BJ (cell line): ENCODE measurements at regions of chr4 and their contacts with region 1.

Region 1: DNA sequence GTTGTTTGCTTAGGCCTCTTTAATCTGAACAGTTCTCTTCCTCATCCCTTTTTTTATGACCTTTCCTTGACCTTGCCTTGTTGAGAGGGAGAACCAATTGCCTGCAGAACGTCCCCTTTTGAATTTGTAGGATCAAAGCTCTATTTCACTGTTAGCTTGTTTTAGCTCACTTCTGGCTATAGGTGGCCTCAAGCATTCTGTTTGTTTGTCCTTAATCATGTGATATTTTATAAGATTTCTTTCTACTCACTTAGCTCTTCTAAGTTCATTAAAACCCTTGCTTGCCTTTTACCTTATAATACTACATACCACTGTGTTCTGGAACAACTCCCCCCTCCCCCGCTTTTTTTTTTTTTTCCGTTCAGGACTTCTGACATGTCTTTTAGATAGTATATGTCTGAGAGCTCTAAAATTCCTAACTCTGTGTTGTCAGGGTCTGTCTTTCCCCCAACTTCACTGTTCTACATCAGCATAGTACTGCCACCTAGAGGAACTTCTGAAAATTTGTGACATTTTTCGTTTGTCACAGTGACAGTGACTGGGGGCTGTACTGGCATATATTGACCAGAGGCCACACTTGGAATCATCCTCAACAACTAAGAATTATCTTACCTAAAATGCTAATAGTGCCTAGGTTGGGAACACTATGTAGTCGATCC is 128.5 kb downstream of the LARP7 start:
- DNase-seq: no peak
- H3K4me3 ChIP-seq: no peak overlapping the region
- H3K27me3 ChIP-seq: no peaks in the 10 kb centered on the region
- CTCF ChIP-seq: peak; percentile 52

Region 2: DNA sequence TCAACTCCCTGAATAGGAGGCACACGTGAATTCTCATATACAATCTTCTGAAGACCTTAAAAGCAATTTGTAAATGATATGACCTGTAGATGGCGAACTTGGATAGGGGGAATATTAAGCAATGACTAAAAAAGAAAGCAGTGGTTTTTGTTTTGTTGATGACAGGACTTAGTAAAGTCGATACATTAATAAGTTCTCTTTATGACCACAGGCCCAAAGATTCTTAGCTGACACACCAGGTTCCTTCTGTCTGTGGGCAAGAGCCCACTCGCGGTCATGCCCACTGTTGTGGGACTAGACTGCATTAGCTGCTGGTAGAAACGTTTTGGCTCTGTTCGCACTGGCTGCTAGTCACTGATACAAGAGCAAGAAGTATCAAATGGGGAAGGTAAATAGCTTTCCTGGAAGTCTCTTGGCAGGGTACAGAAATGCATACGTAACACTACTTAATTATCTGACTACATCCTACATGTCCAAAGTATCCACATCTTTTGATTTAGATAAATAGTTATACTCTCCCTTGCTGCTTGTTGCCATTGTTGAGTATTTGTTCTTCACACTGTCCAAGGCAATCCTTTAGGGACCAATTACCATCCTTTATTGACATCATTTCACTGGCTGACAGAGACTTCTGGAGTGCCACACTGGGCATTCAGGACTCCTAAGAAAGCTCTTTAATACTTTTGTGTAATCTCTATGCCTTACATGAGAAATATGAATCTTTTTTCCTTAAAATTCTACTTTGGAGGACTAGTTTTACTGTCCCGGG is 437.3 kb before region 1 on chr4:
- CTCF ChIA-PET with region 1: interaction called, 13 read pairs
- POLR2A ChIA-PET with region 1: no interaction called
- DNase-seq: no peak
- H3K4me3 ChIP-seq: no peak overlapping the region
- H3K27me3 ChIP-seq: no peaks in the 10 kb centered on the region
- CTCF ChIP-seq: peak; percentile 57

Region 3: DNA sequence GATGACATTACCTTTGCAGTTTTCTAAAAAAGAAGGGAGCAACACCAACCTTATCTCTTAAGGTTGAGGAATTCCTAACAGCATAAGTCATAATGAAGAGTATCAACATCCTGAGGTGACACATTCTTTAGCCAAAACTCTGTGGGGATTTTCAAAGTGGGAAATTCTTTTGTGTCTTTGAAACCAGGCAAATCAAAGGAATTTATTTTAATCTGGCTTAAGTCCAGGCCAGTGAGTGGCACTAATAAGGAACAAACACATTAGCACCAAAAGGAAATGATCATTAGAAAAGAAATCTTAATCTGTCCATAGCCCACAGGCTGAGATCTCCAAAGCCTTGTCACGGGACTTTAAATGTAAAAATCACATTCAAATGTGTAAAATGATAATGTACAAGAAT is 18.4 kb before region 1 on chr4:
- CTCF ChIA-PET with region 1: interaction called, 34 read pairs
- POLR2A ChIA-PET with region 1: no interaction called
- DNase-seq: no peak
- H3K4me3 ChIP-seq: no peak overlapping the region
- H3K27me3 ChIP-seq: no peaks in the 10 kb centered on the region
- CTCF ChIP-seq: no peak

Region 4: GRCh38 chr4:112775801-112776200 is 10.4 kb after region 1 on chr4:
- CTCF ChIA-PET with region 1: interaction called, 20 read pairs
- POLR2A ChIA-PET with region 1: no interaction called
- DNase-seq: no peak
- H3K4me3 ChIP-seq: no peak overlapping the region
- H3K27me3 ChIP-seq: no peaks in the 10 kb centered on the region
- CTCF ChIP-seq: no peak

Region 5: DNA sequence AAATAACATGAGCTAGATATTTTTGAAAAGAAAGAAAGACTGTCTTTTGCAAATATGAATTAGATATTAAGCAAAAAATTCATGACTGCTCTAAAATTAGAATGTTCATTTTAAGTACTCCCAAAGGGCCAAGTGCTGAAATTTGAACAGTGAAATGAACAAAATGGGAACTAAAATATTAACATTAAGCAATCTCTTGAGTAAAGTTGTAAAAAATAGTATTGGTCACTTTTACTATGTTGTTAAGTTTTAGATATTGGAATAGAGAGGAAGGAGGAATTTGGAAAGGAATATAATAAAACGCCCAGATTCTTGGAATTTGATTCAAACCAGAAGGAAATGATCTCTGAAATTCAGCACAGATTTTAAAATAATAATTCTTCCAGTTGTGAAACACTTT is 158.1 kb after region 1 on chr4:
- CTCF ChIA-PET with region 1: interaction called, 10 read pairs
- POLR2A ChIA-PET with region 1: no interaction called
- DNase-seq: no peak
- H3K4me3 ChIP-seq: no peak overlapping the region
- H3K27me3 ChIP-seq: no peaks in the 10 kb centered on the region
- CTCF ChIP-seq: no peak

Region 6: DNA sequence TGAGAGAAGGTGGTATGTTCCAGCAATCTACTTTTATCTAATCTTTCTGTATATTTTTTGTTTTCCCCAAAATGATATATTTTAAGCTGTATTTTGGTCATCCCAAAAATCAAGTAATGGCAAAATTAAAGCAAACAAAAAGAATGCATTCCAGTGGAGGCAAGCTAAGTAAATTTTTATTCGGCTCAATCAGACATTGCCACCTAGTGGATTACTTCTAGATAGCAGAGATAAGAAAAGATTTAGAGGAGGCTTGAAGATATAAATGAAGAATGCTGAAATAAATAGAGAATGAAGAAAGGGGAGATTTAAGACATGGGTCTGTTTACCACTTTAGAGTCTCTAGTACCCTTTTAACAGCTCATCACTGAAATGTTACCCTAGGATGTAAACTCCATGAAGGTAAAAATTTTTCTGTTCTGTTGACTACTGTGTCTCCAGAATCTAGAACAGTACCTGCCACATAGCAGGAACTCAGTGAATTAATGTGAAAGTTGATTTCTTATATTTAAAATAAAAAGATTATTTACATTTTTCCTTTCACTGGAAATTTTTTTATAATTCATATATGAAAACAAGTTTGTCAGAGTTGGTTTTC is 173.1 kb after region 1 on chr4:
- CTCF ChIA-PET with region 1: interaction called, 106 read pairs
- POLR2A ChIA-PET with region 1: no interaction called
- DNase-seq: no peak
- H3K4me3 ChIP-seq: no peak overlapping the region
- H3K27me3 ChIP-seq: no peaks in the 10 kb centered on the region
- CTCF ChIP-seq: peak; percentile 69

Region 7: GRCh38 chr4:112946127-112946526 is 180.7 kb after region 1 on chr4:
- CTCF ChIA-PET with region 1: interaction called, 106 read pairs
- POLR2A ChIA-PET with region 1: no interaction called
- DNase-seq: no peak
- H3K4me3 ChIP-seq: no peak overlapping the region
- H3K27me3 ChIP-seq: 0 out of 2 replicates have a peak, but pooled peaks cover 4% of the 10 kb centered on the region
- CTCF ChIP-seq: no peak

Region 8: GRCh38 chr4:113012786-113013185 is 247.3 kb after region 1 on chr4:
- CTCF ChIA-PET with region 1: no interaction called
- POLR2A ChIA-PET with region 1: no interaction called
- DNase-seq: no peak
- H3K4me3 ChIP-seq: no peak overlapping the region
- H3K27me3 ChIP-seq: no peaks in the 10 kb centered on the region
- CTCF ChIP-seq: no peak

Region 9: DNA sequence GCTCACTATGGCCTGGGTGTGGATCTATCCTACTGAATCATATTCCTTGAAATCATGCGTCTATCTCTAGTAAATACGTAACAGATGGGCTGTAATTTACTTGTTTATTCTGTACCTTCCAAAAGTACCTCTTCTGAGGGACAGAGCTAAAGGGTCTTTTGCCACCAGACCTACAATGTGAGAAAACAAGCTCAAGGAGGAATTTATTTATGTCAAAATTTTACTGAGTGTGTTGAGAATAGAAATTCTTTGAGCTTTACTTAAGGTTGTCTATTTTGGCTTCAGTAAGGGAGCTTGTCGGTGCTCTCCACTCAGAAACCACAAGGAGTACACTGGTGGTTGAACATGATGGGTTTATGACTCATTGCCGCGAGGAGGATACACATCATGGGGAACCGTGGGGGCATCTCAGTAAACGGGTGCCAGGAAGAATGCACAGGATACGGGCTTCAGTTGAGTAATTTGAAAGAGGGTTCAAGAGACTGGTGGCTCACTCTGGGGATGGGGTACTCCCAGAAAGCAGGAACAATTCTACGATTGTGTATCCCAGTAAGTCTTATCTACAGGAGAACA is 287.0 kb after region 1 on chr4:
- CTCF ChIA-PET with region 1: no interaction called
- POLR2A ChIA-PET with region 1: no interaction called
- DNase-seq: no peak
- H3K4me3 ChIP-seq: no peak overlapping the region
- H3K27me3 ChIP-seq: no peaks in the 10 kb centered on the region
- CTCF ChIP-seq: no peak